ENCODE measurements at regions of chr1 and their contacts with region 1.

Region 1: DNA sequence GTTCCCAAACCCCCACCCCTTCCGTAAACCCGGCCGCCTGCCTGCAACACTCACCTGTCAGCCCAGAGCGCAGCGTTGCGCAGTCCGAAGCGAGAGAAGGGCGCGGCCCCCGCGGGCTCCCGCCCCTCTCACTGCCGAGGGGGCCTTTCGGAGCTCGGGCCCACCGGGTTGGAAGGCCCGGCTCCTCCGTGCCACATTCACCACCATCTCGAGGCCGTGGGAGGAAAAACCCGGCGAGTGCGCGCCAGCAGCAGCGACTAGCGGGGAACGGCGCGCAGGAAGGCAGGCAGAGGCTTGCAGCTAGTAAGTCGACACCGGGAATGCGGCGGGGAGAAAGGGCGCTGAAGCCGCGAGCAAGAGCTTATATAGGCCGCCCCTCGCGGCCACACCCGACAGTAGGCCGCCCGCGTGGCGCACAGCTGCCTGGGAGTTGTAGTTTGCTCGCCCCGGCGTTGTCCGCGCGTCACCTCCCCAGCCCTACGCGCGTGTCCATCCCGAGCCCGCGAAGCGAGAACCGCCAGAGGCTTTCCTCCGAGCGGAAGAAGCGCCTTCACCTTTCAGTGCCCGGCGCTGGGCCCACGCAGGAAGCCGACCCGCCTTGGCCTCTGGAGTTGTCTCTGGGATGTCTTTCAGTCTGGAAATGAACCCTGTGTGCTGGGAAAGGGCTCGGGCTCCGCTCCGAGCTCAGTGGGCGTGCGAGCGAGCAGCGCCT is 10.4 kb upstream of the RAB42 start:
- DNase-seq: peak; percentile 92 to 99 (median 96)

Region 2: DNA sequence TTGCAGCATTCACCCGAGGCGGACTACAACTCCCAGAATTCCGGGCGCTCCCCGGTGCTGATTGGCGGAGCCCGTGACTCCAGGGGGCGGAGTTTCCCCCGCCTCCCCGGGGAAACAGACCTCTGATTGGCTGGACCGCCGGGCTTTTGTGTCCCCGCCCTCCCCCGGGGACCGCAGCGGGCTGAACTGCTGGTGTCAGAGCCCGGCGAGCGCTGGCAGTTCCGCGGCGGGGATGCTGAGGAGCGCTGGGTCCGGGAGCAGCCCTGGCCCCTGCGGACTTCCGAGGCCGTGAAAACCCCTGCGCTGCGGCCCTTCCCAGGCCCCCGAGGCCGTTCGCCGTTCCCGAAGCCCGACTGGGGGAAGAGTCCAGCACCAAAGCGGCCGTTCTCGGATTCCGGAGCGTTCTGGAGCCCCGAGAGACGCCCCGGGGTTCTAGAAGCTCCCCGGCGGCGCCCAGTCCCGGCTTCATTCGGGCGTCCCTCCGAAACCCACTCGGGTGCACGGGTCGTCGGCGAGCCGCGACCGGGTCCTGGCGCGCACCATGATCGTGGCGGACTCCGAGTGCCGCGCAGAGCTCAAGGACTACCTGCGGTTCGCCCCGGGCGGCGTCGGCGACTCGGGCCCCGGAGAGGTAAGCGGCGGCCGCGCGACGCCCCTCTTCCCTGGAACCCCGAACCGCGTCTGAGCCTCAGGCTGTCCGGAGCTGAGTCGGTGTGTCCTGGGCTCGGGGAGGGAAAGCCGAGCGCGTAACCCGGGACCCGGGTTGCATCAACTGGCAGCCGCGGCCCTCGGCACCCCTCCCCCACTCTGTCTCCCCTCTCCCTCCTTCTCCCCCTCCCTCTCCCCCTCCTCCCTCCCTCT is 322.2 kb before region 1 on chr1 and contains the start of gene SESN2:
- intact Hi-C with region 1: loop called (anchors 10 kb)
- DNase-seq: peak; percentile 97 to 100 (median 100)

Region 3: GRCh38 chr1:28526889-28527288 is 54.8 kb before region 1 on chr1:
- intact Hi-C with region 1: no loop called
- DNase-seq: peak in 1 of 10 donors; percentile 25

Region 4: DNA sequence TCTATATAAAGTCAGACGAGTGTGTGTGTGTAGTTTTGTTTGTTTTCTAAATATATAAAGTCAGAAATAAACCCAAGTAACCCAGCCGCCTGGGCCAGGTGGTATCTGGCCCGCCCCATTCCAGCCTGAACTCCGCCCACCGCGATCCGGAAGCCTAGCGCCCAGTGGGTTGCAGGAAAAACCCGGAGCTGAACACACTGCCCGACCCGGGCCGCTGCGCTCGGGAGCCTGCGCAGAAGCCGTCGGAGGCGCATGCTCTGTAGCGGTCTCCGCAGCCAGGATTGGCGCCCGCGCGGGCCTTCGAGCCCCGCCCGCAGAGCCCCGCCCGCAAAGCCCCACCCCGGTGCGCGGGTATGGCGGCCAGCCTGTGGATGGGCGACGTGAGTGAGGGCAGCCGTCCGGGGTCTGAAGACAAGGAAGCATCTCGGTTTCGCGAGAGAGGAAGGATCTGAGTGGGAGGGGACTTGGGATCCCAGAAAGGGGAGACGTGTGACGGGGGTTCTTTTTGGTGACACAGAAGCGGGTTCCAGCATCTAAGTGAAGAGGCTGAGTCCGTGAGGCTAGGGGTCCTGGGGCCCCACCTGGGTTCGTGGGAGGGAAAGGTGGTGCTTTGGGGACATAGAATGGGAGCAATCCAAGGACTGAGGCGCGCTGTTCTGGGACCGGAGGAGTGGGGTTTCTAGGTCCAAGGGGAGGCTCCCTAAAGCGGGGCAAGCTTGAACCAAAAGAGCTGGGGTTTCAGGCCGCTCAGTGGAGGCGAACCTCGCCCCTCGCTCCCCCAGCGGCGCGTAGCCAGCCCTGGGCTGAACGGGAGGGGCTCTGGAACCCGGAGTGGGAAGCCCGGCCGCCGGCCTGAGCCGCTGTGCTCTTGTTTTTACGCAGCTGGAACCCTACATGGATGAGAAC is 28.7 kb before region 1 on chr1 and contains the start of gene TRNAU1AP:
- intact Hi-C with region 1: loop called (anchors 1 kb)
- DNase-seq: peak; percentile 88 to 99 (median 92)

Region 5: GRCh38 chr1:28736450-28737306 is 155.0 kb after region 1 on chr1 and contains the start of gene YTHDF2:
- intact Hi-C with region 1: no loop called
- DNase-seq: peak; percentile 92 to 99 (median 95)

Measured in posterior cingulate gyrus (tissue), 11 donors.